ENCODE measurements at regions of chr17 and their contacts with region 1.

Region 1: DNA sequence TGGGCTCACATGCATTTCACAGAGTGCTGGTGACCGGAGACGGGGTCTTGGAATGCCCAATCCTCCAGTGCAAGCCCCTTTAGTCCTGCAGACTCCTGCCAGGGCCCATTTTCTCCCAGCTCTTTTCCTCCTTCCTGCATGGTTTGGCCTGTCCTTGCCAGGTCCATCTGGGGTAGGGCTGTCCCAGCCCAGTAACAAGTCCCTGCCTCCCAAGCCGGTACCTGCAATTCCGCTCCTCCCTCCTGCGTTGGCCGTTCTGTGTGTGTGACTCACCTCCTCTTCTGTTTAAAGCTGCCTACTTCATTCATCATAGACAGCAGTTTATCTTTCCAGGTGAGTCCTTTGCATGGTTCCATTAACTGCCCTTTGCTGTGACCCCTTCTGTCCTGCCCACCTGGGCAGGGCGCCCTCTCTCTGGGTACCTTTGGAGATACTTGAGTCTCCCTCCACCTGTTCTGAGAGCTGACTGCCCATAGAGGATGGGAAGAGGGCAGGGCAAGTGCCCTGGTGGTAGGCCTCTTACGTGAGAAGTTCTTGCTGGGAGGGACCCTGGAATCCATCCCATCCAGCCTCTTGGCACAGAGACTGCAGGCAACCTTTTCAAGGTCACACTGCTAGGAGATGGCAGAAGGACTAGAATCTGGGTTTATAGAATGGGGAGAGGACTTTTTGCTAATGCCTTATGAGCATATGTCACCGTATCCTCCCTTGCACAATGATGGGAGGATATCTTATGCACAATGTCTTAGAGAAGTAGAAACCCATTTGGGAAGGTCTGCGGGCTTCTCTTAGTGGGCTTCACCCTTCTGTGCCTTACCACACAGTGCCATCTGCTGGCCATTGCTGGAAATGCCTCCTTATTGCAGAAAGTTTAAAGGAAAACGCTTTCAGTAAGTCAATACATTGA is 29.7 kb upstream of the LGALS9 start:
- DNase-seq: peak; percentile 49
- H3K4me3 ChIP-seq: no peak overlapping the region
- H3K27ac ChIP-seq: no peak overlapping the region
- H3K4me1 ChIP-seq: peaks cover 13% of the 10 kb centered on the region
- H3K27me3 ChIP-seq: no peaks in the 10 kb centered on the region
- CTCF ChIP-seq: peak; percentile 89 to 96

Region 2: GRCh38 chr17:27199948-27200347 is 401.4 kb before region 1 on chr17:
- CTCF ChIA-PET with region 1: no interaction called
- dilution Hi-C with region 1: no loop called
- in situ Hi-C with region 1: loop called in 1 of 2 experiments (anchors 10 kb)
- intact Hi-C with region 1: loop called (anchors 2 kb)
- DNase-seq: peak; percentile 8
- H3K4me3 ChIP-seq: no peak overlapping the region
- H3K27ac ChIP-seq: no peak overlapping the region
- H3K4me1 ChIP-seq: no peaks in the 10 kb centered on the region
- H3K27me3 ChIP-seq: no peaks in the 10 kb centered on the region
- CTCF ChIP-seq: no peak

Region 3: DNA sequence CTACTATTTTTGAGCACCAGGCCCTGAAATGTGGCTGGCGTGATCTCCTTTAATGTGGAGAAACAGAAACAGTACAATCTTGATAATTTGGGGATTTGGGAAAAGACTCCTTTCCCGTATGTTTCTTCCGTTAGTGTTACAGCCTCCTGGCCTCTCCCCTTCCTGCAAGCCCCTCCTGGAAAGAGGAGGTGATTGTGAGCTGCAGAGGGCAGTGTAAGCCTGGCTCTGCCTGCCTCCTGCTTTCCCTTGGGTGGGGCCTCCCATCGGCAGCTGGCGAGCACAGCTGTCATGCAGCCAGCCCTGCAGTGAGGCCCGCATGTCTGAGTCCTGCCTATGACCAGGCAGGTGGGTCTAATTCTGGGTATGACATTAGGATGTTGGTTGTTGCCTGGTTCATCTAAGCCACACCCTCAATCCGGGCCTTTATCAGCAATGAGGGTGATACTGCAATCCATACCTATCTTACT is 356.1 kb before region 1 on chr17:
- CTCF ChIA-PET with region 1: no interaction called
- dilution Hi-C with region 1: loop called (anchors 25 kb)
- in situ Hi-C with region 1: loop called in 1 of 2 experiments (anchors 25 kb)
- intact Hi-C with region 1: loop called (anchors 2 kb)
- DNase-seq: peak; percentile 76
- H3K4me3 ChIP-seq: peak overlapping the region; percentile 12 to 26 (median 24)
- H3K27ac ChIP-seq: peak overlapping the region; percentile 71
- H3K4me1 ChIP-seq: peaks cover 47% of the 10 kb centered on the region
- H3K27me3 ChIP-seq: no peaks in the 10 kb centered on the region
- CTCF ChIP-seq: peak; percentile 66 to 77

Region 4: GRCh38 chr17:27353461-27354050 is 247.8 kb before region 1 on chr17:
- CTCF ChIA-PET with region 1: no interaction called
- dilution Hi-C with region 1: no loop called
- in situ Hi-C with region 1: loop called (anchors 5 to 10 kb)
- intact Hi-C with region 1: loop called (anchors 1 kb)
- DNase-seq: peak; percentile 89
- H3K4me3 ChIP-seq: peak overlapping the region; percentile 69 to 73 (median 72)
- H3K27ac ChIP-seq: peak overlapping the region; percentile 78
- H3K4me1 ChIP-seq: peaks cover 10% of the 10 kb centered on the region
- H3K27me3 ChIP-seq: no peaks in the 10 kb centered on the region
- CTCF ChIP-seq: peak; percentile 54 to 60

Region 5: DNA sequence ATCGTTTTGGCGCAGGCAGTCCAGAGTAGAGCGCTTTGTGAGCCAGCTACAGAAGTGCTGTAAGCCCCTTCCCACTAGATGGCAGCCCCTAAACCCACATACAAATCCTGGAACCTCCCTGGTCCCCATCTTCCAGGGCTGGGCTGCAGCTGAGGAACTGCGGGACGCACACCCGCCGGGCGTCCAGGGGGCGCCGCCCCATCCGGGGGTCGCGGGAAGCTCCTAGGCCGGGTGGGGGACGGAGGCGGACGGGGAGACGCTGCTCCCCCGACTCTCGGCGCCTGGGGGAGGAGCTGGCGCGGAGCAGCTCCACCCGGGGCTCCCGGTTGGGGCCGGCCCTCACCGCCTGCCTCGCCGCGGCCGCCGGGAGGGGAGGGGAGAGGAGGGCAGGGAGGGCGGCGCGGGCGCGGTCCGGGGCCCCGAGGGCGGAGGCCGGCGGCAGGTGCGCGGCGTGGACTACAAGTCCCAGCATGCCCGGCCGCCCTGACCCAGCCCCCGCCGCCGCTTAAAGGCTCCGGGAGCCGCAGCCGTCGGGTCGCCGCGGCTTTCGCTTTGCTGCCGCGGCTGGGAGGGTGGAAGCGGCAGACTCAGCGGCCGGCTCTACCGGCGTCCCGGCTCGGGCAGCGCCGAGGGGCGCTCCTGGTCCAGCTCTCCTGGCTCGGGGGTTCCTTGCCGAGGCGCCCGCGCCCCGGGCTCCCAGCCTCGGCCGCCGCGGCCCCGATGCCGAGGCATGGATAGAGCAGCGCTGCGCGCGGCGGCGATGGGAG is 145.2 kb before region 1 on chr17 and contains the start of gene KSR1:
- CTCF ChIA-PET with region 1: no interaction called
- dilution Hi-C with region 1: no loop called
- in situ Hi-C with region 1: no loop called
- intact Hi-C with region 1: loop called (anchors 2 kb)
- DNase-seq: peak; percentile 47
- H3K4me3 ChIP-seq: peak within 1 kb of the TSS; percentile 49 to 62 (median 52)
- H3K27ac ChIP-seq: no peak within 1 kb of the TSS
- H3K4me1 ChIP-seq: peaks cover 11% of the 10 kb centered on the region
- H3K27me3 ChIP-seq: peaks cover 9% of the 10 kb centered on the region
- CTCF ChIP-seq: peak in 1 of 2 donors; percentile 29
- total RNA-seq, gene KSR1: 1.6 to 1.7 TPM

Region 6: DNA sequence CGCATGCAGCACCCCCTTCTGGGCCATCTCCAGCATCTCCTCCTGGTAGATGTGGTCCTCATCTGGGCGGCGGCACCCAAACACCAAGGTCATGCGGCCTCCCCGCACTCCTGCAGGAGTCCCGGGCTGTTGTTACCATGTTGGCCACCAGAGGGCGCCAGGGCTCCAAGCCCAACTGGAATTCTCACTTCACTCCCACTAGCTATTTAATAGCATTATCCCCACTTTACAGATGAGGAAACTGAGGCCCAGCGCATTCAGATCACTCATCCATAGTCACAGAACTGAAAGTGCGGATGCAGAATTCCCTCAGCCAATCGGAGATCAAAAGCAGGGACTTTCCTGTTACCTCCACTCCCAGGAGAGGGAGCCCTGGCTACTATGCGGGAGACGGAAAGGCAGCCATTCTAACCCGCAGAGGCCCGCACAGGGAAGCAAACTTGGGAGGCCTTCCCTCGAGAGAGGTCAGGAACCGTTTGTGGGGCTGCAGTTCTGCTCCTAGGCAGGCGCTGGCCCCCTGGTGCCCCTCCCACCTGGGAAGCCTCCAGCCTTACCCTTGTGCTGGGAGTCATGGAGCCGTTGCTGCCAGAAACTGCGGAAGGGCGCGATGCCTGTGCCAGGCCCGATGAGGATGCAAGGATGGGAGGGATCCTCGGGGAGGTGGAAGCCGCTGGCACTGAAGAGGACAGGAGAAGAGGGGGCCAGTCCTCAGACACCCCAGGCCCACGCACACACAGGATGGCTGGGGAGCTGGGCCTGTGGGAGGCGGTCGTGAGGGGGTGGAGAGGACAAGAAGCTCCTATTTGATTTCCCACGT is 159.0 kb after region 1 on chr17:
- CTCF ChIA-PET with region 1: no interaction called
- dilution Hi-C with region 1: no loop called
- in situ Hi-C with region 1: no loop called
- intact Hi-C with region 1: loop called (anchors 2 kb)
- DNase-seq: peak; percentile 19
- H3K4me3 ChIP-seq: no peak overlapping the region
- H3K27ac ChIP-seq: no peak overlapping the region
- H3K4me1 ChIP-seq: no peaks in the 10 kb centered on the region
- H3K27me3 ChIP-seq: no peaks in the 10 kb centered on the region
- CTCF ChIP-seq: peak; percentile 60 to 84

Measured in mammary epithelial cell (primary cell).